ENCODE measurements at regions of chr22 and their contacts with region 1.

Region 1: GRCh38 chr22:44286646-44287045 is 26.1 kb downstream of the SHISAL1 start:
- DNase-seq: no peak
- ATAC-seq: no peak
- H3K4me3 ChIP-seq: no peak overlapping the region
- H3K27ac ChIP-seq: no peak overlapping the region
- H3K4me1 ChIP-seq: no peaks in the 10 kb centered on the region
- H3K27me3 ChIP-seq: no peaks in the 10 kb centered on the region
- CTCF ChIP-seq: no peak

Region 2: DNA sequence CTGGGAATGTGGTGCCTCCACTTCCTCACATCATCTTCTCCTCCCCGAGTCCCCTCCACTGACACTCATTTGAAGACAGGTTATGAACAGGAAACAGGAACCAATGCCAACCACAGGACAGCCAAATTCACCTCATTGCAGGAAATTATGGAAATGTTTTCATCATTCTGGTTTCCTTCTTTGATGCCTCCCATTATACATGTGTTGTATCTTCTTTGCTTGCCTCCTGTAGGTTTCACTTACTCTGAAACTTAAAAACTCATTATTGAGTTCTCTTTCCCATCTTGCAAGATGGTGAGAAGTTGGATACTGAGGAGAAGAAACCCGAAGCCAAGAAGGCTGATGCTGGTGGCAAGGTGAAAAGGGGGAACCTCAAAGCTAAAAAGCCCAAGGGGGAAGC is 614.7 kb after region 1 on chr22:
- CTCF ChIA-PET with region 1: interaction called, 10 read pairs
- POLR2A ChIA-PET with region 1: no interaction called
- in situ Hi-C with region 1: no loop called
- intact Hi-C with region 1: no loop called
- DNase-seq: no peak
- ATAC-seq: no peak
- H3K4me3 ChIP-seq: no peak overlapping the region
- H3K27ac ChIP-seq: no peak overlapping the region
- H3K4me1 ChIP-seq: no peaks in the 10 kb centered on the region
- H3K27me3 ChIP-seq: no peaks in the 10 kb centered on the region
- CTCF ChIP-seq: no peak

Measured in Panc1 (cell line).